Left lung (tissue), 14 donors: ENCODE measurements at regions of chr22 and their contacts with region 1.

Region 1: GRCh38 chr22:28435140-28435768 is 244.4 kb downstream of the TTC28 start:
- DNase-seq: no peak
- ATAC-seq: peak; percentile 82
- H3K4me3 ChIP-seq: no peak overlapping the region
- H3K27ac ChIP-seq: peak overlapping the region in 1 of 2 donors; percentile 19
- H3K4me1 ChIP-seq: peaks cover 11 to 12% of the 10 kb centered on the region in 2 donors
- H3K27me3 ChIP-seq: no peaks in the 10 kb centered on the region
- CTCF ChIP-seq: no peak

Region 2: GRCh38 chr22:28252539-28252938 is 182.7 kb before region 1 on chr22:
- intact Hi-C with region 1: loop called in 1 of 2 experiments (anchors 10 kb)
- DNase-seq: no peak
- ATAC-seq: no peak
- H3K4me3 ChIP-seq: no peak overlapping the region
- H3K27ac ChIP-seq: no peak overlapping the region
- H3K4me1 ChIP-seq: no peaks in the 10 kb centered on the region
- H3K27me3 ChIP-seq: no peaks in the 10 kb centered on the region
- CTCF ChIP-seq: no peak

Region 3: GRCh38 chr22:28297504-28297903 is 137.8 kb before region 1 on chr22:
- intact Hi-C with region 1: no loop called
- DNase-seq: no peak
- ATAC-seq: no peak
- H3K4me3 ChIP-seq: no peak overlapping the region
- H3K27ac ChIP-seq: no peak overlapping the region
- H3K4me1 ChIP-seq: no peaks in the 10 kb centered on the region
- H3K27me3 ChIP-seq: no peaks in the 10 kb centered on the region
- CTCF ChIP-seq: no peak